ENCODE measurements at regions of chr16 and their contacts with region 1.

Region 1: DNA sequence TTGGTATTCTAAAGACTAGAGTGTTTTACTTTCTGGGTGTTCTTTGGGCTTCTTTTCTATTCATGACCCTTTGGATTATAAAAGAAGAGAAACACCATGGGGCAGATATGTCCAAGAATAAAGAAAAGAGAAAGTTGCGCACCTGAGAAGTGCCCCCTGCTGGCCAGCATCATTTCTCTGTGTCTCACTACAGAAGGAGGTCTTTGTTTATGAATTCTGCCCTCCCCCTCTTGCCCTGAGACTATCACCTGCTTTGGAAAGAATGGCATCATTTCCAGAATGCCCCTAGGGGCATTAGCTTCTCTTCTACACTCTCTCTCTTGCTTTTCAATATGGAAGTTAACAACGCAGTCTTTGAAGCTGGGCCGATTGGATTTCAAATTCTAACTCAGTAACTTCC is 45.0 kb downstream of the CDH13 start:
- DNase-seq: peak in 6 of 9 experiments; percentile 18 to 65 (median 41)
- ATAC-seq: no peak
- H3K4me3 ChIP-seq: no peak overlapping the region
- H3K4me3 Mint-ChIP-seq: no peak overlapping the region
- H3K27ac ChIP-seq: no peak overlapping the region
- H3K27ac Mint-ChIP-seq: no peak overlapping the region
- H3K4me1 ChIP-seq: no peaks in the 10 kb centered on the region
- H3K4me1 Mint-ChIP-seq: no peaks in the 10 kb centered on the region
- H3K27me3 ChIP-seq: peaks cover 0 to 3% of the 10 kb centered on the region in 2 experiments
- H3K27me3 Mint-ChIP-seq: peaks cover 3% of the 10 kb centered on the region
- CTCF ChIP-seq: peak; percentile 29

Region 2: DNA sequence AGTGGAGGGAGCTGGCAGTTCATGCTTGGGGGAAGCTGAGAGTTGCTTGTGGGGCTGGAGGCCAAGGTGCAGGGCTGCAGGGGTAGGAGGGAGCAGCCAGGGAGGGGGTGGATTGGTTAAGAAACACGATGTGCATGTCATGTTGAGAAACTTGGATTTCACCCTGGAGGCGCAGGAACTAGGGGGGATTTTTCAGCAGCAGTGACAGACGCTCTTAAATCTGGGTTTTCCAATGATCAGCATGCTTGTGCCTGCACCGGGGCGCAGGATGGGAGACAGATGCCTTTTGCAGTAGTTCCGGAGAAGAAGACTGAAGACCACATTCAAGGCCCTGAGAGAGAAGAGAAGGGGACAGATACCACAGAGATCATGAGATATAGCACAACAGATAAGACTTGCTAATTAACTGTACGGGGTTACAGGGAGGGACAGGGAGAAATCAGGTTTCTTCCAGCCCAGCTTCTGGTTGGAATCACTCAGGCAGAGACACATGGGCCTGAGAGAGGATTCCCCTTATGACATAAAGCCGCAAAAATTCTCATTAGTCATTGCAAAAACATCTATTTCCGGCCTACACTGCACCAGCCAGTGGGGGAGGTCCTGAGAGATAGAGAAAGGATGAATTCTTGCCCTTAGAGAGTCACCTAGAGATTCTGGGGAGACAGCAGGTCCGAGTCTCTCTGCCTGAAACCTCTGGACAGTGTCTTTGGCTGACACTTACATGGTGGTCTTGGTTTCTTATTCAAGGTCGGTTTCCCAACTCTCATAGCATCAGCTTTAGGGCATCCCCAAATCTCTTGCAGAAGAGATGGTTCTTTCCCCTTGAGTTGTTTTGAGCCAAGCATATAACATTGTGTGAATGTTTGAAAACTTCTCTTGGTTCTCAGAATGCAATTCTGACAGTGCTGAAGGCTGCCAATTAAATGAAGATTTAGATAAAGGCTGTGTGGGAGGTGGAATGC is 17.9 kb before region 1 on chr16:
- CTCF ChIA-PET with region 1: interaction called, 11 read pairs
- POLR2A ChIA-PET with region 1: interaction called, 9 read pairs
- intact Hi-C with region 1: loop called (anchors 2 kb)
- DNase-seq: peak in 8 of 9 experiments; percentile 1 to 89 (median 34)
- ATAC-seq: peak; percentile 62
- H3K4me3 ChIP-seq: no peak overlapping the region
- H3K4me3 Mint-ChIP-seq: peak overlapping the region; percentile 58
- H3K27ac ChIP-seq: peak overlapping the region in 1 of 2 experiments; percentile 91
- H3K27ac Mint-ChIP-seq: peak overlapping the region; percentile 90
- H3K4me1 ChIP-seq: peaks cover 63% of the 10 kb centered on the region
- H3K4me1 Mint-ChIP-seq: peaks cover 88% of the 10 kb centered on the region
- H3K27me3 ChIP-seq: no peaks in the 10 kb centered on the region
- H3K27me3 Mint-ChIP-seq: no peaks in the 10 kb centered on the region
- CTCF ChIP-seq: no peak

Measured in CD8-positive, alpha-beta T cell (primary cell).